ENCODE measurements at regions of chr14 and their contacts with region 1.

Region 1: DNA sequence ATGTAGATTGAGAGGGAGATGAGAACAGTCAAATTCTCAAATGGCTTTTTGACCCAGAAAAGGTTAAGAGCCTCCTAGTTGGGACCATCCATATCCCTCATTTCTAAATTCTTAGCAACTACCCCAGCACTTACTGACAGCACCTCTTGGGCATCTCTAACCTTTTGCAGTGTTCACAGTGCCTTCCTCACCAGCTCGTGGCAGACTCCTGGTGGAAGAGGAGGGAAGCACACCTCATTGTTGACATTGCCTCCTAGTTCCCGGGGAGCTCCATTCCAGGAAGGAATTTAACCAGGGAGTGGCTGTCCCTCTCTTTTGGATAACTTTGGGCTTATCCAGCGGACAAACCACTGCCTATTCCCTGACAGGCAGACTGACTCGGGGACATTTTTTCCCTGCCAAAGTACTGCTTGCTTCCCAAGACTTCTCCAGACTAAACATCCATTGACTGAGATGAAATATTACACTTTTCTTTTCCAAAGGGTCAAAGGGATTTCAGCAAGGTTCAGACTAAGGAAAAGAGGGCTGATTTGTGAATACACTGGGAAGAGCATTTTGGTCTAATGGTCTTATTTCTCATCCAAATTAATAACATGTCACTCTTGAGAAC is 9.0 kb upstream of the OR6J1 start:
- DNase-seq: peak; percentile 83
- H3K4me3 ChIP-seq: no peak overlapping the region
- H3K27ac ChIP-seq: no peak overlapping the region
- H3K4me1 ChIP-seq: peaks cover 4% of the 10 kb centered on the region
- H3K27me3 ChIP-seq: no peaks in the 10 kb centered on the region
- CTCF ChIP-seq: peak; percentile 68

Region 2: DNA sequence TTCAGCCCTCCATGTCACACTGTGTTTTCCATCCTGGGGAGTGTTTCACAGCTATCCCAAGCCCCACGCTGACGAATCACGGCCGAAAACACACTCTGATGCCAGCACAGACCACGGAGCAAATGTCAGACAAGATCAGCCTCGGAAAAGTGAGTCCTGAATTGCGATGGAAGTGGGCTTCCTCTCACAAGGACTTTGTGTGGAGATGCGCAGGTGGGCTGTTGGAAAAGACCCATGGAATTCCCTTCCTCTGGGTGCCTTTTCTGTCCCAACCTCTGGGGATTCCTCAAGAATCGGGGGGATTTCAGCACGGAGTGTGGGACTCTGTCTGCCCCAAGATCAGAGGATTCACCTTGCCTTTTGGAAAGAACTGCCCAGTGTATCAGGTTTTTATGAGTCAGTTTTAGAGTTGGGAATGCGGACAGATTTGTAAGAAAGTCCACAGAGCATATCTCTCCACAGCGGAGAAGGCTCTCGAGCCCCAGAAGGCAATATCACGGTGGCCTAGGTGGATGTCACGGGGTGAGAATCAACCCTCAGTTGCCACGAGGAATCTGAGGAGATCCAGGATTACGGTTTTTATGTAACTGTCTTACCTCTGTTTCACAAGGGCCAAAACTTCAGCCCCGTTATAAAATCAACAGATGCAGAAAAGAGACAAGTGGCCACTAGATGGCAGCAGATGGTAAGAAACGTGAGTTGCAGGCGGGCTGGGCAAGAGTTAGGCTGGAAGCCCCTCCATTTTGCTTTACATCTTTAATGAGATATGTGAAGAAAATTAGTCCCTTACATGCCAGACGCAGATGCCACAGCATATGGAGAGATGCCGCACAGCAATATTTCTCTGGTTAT is 266.0 kb before region 1 on chr14:
- intact Hi-C with region 1: loop called (anchors 10 kb)
- DNase-seq: peak; percentile 81
- H3K4me3 ChIP-seq: no peak overlapping the region
- H3K27ac ChIP-seq: no peak overlapping the region
- H3K4me1 ChIP-seq: no peaks in the 10 kb centered on the region
- H3K27me3 ChIP-seq: no peaks in the 10 kb centered on the region
- CTCF ChIP-seq: peak; percentile 75

Region 3: GRCh38 chr14:22556990-22557623 is 96.0 kb before region 1 on chr14:
- intact Hi-C with region 1: loop called (anchors 5 kb)
- DNase-seq: peak; percentile 92
- H3K4me3 ChIP-seq: peak overlapping the region; percentile 22
- H3K27ac ChIP-seq: peak overlapping the region; percentile 67
- H3K4me1 ChIP-seq: peaks cover 19% of the 10 kb centered on the region
- H3K27me3 ChIP-seq: no peaks in the 10 kb centered on the region
- CTCF ChIP-seq: peak; percentile 98

Region 4: GRCh38 chr14:22570132-22570949 is 82.8 kb before region 1 on chr14:
- intact Hi-C with region 1: loop called (anchors 5 kb)
- DNase-seq: peak; percentile 86
- H3K4me3 ChIP-seq: no peak overlapping the region
- H3K27ac ChIP-seq: peak overlapping the region; percentile 8
- H3K4me1 ChIP-seq: no peaks in the 10 kb centered on the region
- H3K27me3 ChIP-seq: no peaks in the 10 kb centered on the region
- CTCF ChIP-seq: peak; percentile 82

Region 5: DNA sequence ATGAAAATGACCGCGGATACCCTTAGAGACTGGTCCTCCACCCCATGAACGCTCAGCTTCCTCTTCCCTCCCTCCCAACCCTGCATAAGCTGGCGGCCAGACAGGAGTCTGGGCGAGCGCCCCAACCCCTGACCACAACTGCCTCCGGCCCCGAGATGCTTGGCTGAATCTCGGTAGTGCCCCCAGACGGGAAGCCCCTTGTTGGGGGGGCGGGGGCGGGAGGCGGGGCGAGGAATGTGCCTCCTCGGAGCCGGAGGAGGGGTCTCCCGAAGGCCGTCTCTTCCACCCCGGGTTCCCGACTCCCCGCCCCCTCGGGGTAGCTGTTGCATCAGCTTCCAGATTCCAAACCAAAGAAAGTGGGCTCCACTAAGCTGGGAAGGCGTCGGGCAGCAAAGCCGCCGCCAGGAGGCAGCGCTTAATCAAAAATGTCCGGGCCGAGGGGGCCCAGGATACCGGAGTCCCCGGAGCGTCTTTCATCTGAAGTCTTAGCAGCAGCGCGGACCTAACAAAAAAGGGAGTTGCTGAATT is 169.5 kb after region 1 on chr14:
- intact Hi-C with region 1: loop called (anchors 10 kb)
- DNase-seq: peak; percentile 84
- H3K4me3 ChIP-seq: peak overlapping the region; percentile 34
- H3K27ac ChIP-seq: peak overlapping the region; percentile 7
- H3K4me1 ChIP-seq: no peaks in the 10 kb centered on the region
- H3K27me3 ChIP-seq: no peaks in the 10 kb centered on the region
- CTCF ChIP-seq: peak; percentile 81

Region 6: DNA sequence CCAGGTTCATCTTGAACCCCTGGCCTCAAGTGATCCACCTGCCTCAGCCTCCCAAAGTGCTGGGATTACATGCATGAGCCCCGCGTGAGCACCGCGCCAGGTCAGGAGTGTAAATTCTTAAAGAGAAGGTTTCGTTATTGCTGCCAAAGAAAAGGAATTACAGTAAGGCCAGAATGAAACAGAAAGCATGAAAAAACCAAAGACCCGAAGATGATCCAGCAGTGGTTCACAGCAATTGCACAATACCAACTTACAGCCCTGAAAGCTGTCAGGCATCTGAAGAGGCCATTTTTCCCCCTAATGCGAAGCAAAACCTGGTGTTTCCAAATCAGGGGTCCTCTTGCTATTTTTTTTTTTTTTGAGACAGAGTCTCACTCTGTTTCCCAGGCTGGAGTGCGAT is 255.5 kb after region 1 on chr14:
- intact Hi-C with region 1: no loop called
- DNase-seq: no peak
- H3K4me3 ChIP-seq: no peak overlapping the region
- H3K27ac ChIP-seq: no peak overlapping the region
- H3K4me1 ChIP-seq: no peaks in the 10 kb centered on the region
- H3K27me3 ChIP-seq: no peaks in the 10 kb centered on the region
- CTCF ChIP-seq: no peak